ENCODE measurements at regions of chr1 and their contacts with region 1.

Region 1: GRCh38 chr1:85027242-85027983 is 20.9 kb downstream of the MCOLN3 start:
- DNase-seq: no peak
- H3K4me3 ChIP-seq: no peak overlapping the region
- H3K27ac ChIP-seq: no peak overlapping the region
- H3K4me1 ChIP-seq: no peaks in the 10 kb centered on the region
- H3K27me3 ChIP-seq: no peaks in the 10 kb centered on the region
- CTCF ChIP-seq: peak in 1 of 4 experiments; percentile 11
- POLR2A ChIP-seq: no peak

Region 2: DNA sequence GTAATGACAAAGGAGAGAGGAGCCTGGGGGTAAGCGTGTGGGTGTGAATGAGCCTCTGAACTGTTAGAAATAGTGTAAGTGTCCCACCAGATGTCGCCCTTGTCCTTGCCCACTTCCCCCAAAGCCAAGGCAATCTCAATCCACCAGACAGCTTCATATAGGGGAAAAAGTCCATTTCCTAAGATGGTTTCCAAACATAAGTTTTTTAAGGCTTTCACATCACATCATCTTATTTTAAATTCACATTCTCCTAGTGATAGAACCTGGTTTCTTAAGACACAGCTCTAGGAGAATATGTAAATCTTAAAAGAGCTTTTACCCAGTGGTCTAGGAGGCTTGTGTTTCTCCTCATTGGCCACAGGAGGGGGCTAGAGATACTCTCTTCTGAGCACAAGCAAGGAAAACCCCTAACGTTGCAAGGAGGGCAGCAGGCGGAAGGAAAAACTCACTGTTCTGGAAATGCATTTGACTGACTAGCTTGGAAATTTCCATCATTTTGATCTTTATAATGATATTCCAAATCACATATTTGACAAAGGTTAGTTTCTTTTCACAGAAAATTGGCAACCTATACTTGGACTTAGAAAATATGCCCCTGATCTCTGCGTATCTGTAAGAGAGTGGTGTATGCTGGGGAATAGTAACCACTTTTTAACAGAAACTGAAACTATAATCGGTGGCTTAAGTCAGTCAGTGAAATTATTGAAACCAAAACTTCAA is 82.5 kb before region 1 on chr1:
- intact Hi-C with region 1: loop called (anchors 2 kb)
- DNase-seq: peak; percentile 69
- H3K4me3 ChIP-seq: peak overlapping the region; percentile 28
- H3K27ac ChIP-seq: peak overlapping the region; percentile 55 to 60
- H3K4me1 ChIP-seq: no peaks in the 10 kb centered on the region
- H3K27me3 ChIP-seq: no peaks in the 10 kb centered on the region
- CTCF ChIP-seq: peak; percentile 52 to 93 (median 89)
- POLR2A ChIP-seq: no peak